GM18951 (cell line): ENCODE measurements at regions of chr17 and their contacts with region 1.

Region 1: DNA sequence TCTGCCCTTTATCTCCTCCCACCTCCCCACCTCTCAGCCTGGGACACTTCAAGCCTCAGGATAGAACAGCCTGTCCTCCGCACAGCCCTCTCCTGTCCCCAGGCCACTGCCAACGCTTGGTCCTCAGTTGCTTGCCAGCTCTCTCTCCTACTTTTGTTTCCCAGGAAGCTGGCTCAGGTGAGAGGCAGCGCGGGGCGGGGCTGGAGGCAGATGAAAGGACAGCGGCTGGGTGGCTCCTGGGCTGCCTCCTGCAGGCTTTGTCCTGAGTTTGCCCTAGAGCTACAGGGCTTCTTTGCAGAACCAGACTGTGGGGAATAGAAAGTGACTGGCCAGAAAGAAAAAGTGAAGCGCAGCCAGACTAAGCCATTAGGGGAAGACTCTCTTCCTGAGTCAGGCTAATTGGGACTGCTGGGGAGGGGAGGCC is 48.2 kb upstream of the CDC42EP4 start:
- POLR2A ChIP-seq: no peak

Region 2: GRCh38 chr17:72556944-72557826 is 802.8 kb before region 1 on chr17:
- in situ Hi-C with region 1: loop called (anchors 25 kb)
- POLR2A ChIP-seq: no peak

Region 3: DNA sequence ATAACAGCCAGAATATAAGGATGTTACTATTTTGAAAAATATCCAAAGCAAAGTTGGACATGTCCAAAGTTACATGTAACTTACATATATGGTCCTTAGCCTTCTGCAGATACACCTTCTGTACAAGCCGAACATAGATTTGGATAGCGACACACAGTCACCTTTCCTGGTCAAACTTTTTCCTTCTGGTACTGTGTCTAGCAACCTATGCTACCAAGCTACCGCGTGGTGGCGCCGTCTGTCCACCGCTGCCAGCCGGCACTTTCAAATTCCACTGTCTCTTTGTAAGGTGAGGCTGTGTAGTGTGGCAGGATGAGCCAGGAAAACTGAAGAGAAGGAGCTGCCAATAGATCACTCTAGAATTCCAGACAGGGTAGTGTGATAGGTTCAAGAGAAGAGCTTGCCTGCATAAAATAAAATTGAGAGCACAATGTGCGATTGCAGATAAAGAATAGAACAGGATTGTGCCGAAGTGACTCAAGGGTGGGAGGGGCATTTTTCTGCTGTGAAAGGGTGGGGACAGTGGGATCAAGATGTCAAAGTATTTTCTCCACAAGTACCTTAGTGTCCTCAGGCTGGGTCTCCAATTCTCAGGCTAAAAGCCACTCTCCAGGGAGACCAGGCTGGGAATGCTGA is 634.4 kb before region 1 on chr17:
- in situ Hi-C with region 1: loop called (anchors 10 kb)
- POLR2A ChIP-seq: no peak

Region 4: DNA sequence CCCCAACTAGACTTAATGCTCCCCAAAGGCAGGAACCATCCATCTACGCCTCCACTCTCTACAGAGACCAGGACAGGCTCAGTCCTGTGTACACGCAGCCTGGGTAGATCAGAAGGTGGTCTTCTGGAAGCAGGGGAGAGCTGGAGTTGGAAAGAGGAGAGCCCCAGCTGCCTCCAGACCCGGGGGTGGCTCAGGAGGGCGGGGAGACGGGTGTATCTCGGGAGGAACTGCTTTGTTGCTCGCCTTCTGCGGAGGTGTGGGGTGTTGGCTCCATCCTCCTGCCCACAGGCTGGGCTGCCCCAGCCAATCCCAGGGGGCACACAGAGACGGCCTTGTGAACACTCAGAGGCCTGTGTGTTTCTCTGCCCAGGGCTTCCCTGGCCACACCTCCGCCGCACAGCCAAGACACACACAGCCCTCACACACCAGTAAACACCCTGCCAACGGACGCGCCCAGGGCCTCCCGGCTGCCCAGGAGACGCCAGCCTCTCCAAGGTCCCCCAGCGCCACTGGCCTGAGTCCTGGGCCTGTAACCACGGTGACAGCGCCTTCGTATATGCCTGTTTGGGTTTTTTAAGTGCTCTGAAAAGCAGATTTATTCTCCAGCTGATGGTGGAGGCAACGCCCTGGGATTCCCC is 95.2 kb after region 1 on chr17:
- in situ Hi-C with region 1: no loop called
- POLR2A ChIP-seq: no peak